ENCODE measurements at regions of chr3 and their contacts with region 1.

Region 1: GRCh38 chr3:27533718-27534573 is 49.8 kb upstream of the SLC4A7 start:
- DNase-seq: peak; percentile 87 to 97
- H3K4me3 ChIP-seq: peak overlapping the region; percentile 9; the same call in 1 of the 2 replicates
- H3K27ac ChIP-seq: peak overlapping the region; percentile 95
- H3K4me1 ChIP-seq: peaks cover 54% of the 10 kb centered on the region
- H3K27me3 ChIP-seq: no peaks in the 10 kb centered on the region
- CTCF ChIP-seq: peak; percentile 58; the same call in 1 of the 2 replicates

Region 2: DNA sequence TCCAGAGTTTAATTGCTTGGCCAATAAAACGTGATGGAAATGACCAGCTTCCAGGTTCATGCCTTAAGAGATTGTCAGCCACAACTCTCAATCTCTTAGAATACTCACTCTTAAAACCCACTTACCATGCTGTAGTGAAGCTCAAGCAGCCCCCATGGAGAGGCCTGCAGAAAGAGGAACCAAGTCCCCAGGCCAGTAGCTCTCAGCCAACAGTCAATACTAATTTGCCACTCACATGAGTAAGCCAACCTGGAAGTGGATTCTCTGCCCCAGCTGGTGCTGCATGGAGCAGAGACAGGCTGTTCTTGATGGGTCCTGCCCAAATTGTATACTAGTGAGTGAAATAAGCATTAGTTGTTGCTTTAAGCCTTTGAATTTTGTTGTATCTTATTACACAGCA is 1588.1 kb before region 1 on chr3:
- CTCF ChIA-PET with region 1: no interaction called
- POLR2A ChIA-PET with region 1: interaction called, 10 read pairs
- intact Hi-C with region 1: no loop called
- DNase-seq: no peak
- H3K4me3 ChIP-seq: no peak overlapping the region
- H3K27ac ChIP-seq: no peak overlapping the region
- H3K4me1 ChIP-seq: no peaks in the 10 kb centered on the region
- H3K27me3 ChIP-seq: no peaks in the 10 kb centered on the region
- CTCF ChIP-seq: no peak

Region 3: GRCh38 chr3:27194494-27195458 is 339.2 kb before region 1 on chr3:
- CTCF ChIA-PET with region 1: no interaction called
- POLR2A ChIA-PET with region 1: no interaction called
- intact Hi-C with region 1: loop called (anchors 10 kb)
- DNase-seq: no peak
- H3K4me3 ChIP-seq: no peak overlapping the region
- H3K27ac ChIP-seq: peak overlapping the region; percentile 75
- H3K4me1 ChIP-seq: peaks cover 17% of the 10 kb centered on the region
- H3K27me3 ChIP-seq: no peaks in the 10 kb centered on the region
- CTCF ChIP-seq: no peak

Region 4: DNA sequence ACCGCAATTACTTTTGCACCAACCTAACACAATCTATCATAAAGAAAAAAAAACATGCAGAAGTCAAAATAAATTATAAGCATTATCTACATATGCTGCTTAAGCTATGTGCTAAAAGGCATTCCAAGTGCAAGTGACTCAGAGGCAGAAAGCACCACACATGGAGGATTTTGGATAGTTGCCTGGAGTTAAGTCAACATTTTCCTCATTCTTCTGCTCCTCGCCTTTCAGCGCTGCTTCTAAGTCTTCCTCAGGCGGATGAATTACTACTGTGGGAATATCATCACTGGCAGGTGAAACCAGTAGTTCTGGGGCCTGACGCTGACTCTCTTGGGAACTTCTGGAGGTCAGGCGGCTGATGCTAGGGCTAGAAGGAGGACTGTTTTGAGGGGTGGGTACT is 102.8 kb before region 1 on chr3:
- CTCF ChIA-PET with region 1: no interaction called
- POLR2A ChIA-PET with region 1: interaction called, 3 read pairs
- intact Hi-C with region 1: loop called (anchors 5 kb)
- DNase-seq: peak; percentile 65 to 86
- H3K4me3 ChIP-seq: no peak overlapping the region
- H3K27ac ChIP-seq: peak overlapping the region; percentile 39
- H3K4me1 ChIP-seq: peaks cover 15% of the 10 kb centered on the region; the same call in 1 of the 2 replicates
- H3K27me3 ChIP-seq: no peaks in the 10 kb centered on the region
- CTCF ChIP-seq: no peak

Region 5: DNA sequence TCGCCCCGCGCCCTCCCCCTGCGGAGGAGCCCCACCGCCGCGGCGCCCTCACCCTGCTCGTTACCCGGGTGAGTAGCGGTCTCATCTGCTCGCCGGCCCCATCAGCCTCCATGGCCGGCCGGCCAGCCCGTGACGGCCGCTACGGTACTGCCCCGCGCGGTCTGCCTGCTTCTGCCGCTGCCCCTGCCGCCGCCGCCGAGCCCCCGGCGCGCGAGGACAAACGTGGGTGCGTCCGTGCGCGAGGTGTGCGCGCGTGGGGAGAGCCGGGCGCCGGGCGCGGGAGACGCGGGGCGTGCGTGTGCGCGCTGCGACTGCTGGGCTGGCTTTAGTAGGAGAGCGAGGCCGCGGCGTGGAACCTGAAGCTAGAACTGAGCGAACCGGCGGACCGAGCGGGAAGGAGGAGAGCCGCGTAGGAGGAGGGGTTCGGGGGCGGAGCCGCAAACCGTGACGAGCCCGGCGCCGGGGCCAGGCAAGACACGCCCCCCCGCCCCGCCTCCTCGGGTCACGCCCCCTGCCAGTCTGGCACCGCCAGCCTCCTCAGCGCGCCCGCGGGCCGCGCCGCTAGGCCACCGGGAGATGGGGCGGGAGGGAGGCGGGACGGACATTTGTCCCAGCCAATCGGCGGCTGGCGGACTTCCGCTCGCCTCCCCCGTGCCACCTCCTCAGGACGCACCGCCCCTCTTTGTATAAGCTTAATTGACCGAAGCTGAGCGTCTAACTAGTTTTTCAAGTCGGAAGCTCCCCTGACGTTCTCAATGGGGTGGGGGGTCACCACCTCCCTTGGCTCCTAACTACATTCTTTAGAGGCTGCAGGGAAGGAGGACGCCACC is 49.7 kb before region 1 on chr3 and contains the start of gene SLC4A7:
- CTCF ChIA-PET with region 1: no interaction called
- POLR2A ChIA-PET with region 1: interaction called, 3 read pairs
- intact Hi-C with region 1: loop called (anchors 1 kb)
- DNase-seq: peak; percentile 89 to 98
- H3K4me3 ChIP-seq: peak within 1 kb of the TSS; percentile 77
- H3K27ac ChIP-seq: peak within 1 kb of the TSS; percentile 71
- H3K4me1 ChIP-seq: peaks cover 38% of the 10 kb centered on the region
- H3K27me3 ChIP-seq: no peaks in the 10 kb centered on the region
- CTCF ChIP-seq: no peak
- total RNA-seq, gene SLC4A7: 28.1 and 31.7 TPM in 2 replicates

Region 6: DNA sequence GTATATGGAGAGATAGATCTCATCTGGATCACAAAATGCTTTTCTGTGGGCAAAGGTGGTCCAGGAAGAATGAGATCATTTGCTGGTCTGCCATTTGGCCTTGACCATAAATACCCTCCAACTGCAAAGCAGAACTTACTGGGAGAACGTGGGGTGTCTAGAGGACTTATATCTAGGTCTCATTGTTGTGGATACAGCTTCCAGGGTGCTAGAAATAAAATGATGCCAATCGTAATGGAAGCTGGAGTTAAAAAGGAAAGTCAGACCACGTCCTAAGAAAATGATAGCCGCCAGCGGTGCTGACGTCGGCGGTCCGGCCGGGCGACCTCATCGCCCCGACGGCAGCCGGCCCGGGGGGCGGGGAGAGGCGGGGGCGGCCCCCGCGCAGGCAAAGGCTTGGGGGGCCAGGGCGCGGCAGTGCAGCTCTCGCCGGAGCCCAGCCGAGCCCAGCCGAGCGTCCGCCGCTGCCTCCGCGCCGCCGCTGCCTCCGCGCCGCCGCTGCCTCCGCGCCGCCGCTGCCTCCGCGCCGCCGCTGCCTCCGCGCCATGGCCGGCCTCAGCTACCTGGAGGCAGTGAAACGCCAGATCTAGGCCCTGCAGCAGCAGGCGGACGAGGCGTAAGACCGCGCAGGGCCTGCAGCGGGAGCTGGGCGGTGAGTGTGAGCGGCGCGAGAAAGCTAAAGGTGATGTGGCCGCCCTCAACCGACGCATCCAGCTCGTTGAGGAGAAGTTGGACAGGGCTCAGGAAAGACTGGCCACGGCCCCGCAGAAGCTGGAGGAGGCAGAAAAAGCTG is 98.7 kb after region 1 on chr3:
- CTCF ChIA-PET with region 1: interaction called, 17 read pairs
- POLR2A ChIA-PET with region 1: no interaction called
- intact Hi-C with region 1: no loop called
- DNase-seq: peak; percentile 39 to 59
- H3K4me3 ChIP-seq: peak overlapping the region; percentile 61
- H3K27ac ChIP-seq: peak overlapping the region; percentile 41; the same call in 1 of the 2 replicates
- H3K4me1 ChIP-seq: peaks cover 24% of the 10 kb centered on the region
- H3K27me3 ChIP-seq: no peaks in the 10 kb centered on the region
- CTCF ChIP-seq: no peak

Measured in PC-9 (cell line).